G401 (cell line): ENCODE measurements at regions of chr5 and their contacts with region 1.

Region 1: GRCh38 chr5:38323645-38324295 is 65.4 kb downstream of the EGFLAM start:
- DNase-seq: no peak

Region 2: GRCh38 chr5:38373743-38374142 is 50.0 kb after region 1 on chr5:
- in situ Hi-C with region 1: loop called (anchors 10 kb)
- DNase-seq: no peak

Region 3: DNA sequence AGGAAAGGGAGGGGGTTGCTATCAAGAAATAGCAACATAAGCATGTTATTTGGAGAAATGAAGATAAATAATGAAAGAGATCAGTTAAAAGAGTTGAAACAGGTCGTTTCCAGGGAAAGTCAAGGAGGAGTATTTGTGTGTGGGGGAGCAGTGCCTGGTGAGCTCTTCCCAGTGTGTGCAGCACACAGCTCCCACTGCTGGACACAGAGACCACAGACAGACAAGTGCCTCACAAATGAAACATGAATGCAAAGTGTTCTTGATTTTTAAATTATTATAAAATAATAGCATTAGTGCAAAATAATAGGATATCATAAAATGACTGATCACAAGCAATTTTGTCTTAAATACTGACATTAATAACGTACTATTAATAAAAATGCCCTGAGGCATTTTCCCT is 191.9 kb after region 1 on chr5:
- in situ Hi-C with region 1: no loop called
- DNase-seq: no peak